Sciatic nerve (tissue), 2 donors: ENCODE measurements at regions of chr9 and their contacts with region 1.

Region 1: DNA sequence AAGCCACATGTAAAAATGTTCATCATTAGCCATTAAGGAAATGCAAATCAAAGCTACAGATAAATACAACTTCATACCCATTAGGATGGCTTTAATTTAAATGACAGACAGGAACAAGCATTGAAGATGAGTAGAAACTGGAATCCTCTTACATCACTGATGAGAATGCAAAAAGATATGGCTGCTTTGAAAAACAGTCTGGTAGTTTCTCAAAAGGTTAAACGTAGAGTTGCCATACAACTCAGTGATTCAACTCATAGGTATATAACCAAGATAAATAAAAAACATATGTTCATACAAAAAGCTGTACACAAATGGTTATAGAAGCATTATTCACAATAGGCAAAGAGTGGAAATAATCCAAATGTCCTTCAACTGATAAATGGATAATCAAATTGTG is 228.8 kb upstream of the ZNF462 start:
- DNase-seq: no peak
- ATAC-seq: no peak

Region 2: DNA sequence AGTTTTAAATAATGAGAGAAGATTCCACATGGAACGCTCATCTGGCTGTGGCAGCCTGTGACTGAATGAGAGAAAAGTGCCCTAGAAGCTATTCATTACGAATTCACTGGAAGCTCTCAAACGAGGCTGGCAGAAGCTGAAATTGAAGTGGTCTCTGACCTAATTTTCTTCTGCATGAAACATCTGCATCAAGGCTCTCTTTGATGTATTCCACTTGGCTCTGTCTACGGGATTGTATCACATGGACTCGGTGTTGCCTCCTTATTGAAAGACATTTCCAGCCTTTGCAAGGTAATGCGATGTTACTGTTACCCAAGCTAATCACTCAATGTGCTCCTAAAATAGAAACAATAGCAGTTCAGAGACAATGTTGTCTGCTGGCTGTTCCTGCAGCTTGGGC is 18.2 kb before region 1 on chr9:
- intact Hi-C with region 1: loop called (anchors 2 kb)
- DNase-seq: no peak
- ATAC-seq: no peak

Region 3: GRCh38 chr9:106921341-106921899 is 287.2 kb after region 1 on chr9:
- intact Hi-C with region 1: no loop called
- DNase-seq: no peak
- ATAC-seq: peak; percentile 91